Activated B cell treated with CpG ODN at 0.5 μM for 24 hours (primary cell): ENCODE measurements at regions of chr7 and their contacts with region 1.

Region 1: GRCh38 chr7:23531794-23532489 is at the start of gene TRA2A:
- DNase-seq: peak; percentile 97
- ATAC-seq: peak; percentile 89
- H3K4me3 Mint-ChIP-seq: peak within 1 kb of the TSS; percentile 99
- H3K27ac Mint-ChIP-seq: peak within 1 kb of the TSS; percentile 100
- H3K4me1 Mint-ChIP-seq: peaks cover 49% of the 10 kb centered on the region
- H3K27me3 Mint-ChIP-seq: no peaks in the 10 kb centered on the region
- CTCF ChIP-seq: no peak
- total RNA-seq, gene TRA2A: 123 and 144 TPM in 2 replicates

Region 2: DNA sequence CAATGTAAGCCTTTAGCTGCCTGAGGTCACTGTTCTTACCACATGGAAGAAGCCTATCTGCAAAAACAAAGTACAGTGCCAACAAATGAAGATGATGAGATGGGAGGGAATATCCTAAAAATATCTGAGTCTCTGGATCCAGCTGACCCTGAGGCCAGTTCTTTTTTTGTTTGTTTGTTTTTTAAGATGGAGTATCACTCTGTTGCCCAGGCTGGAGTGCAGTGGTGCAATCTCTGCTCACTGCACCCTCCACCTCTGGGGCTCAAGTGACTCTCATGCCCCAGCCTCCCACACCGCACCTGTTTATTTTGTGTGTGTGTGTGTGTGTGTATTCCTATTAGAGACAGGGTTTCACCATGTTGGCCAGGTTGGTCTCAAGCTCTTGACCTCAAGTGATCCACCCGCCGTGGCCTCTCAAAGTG is 562.9 kb before region 1 on chr7:
- CTCF ChIA-PET with region 1: no interaction called
- POLR2A ChIA-PET with region 1: no interaction called
- intact Hi-C with region 1: no loop called
- DNase-seq: no peak
- ATAC-seq: no peak
- H3K4me3 Mint-ChIP-seq: no peak overlapping the region
- H3K27ac Mint-ChIP-seq: no peak overlapping the region
- H3K4me1 Mint-ChIP-seq: no peaks in the 10 kb centered on the region
- H3K27me3 Mint-ChIP-seq: no peaks in the 10 kb centered on the region
- CTCF ChIP-seq: no peak

Region 3: DNA sequence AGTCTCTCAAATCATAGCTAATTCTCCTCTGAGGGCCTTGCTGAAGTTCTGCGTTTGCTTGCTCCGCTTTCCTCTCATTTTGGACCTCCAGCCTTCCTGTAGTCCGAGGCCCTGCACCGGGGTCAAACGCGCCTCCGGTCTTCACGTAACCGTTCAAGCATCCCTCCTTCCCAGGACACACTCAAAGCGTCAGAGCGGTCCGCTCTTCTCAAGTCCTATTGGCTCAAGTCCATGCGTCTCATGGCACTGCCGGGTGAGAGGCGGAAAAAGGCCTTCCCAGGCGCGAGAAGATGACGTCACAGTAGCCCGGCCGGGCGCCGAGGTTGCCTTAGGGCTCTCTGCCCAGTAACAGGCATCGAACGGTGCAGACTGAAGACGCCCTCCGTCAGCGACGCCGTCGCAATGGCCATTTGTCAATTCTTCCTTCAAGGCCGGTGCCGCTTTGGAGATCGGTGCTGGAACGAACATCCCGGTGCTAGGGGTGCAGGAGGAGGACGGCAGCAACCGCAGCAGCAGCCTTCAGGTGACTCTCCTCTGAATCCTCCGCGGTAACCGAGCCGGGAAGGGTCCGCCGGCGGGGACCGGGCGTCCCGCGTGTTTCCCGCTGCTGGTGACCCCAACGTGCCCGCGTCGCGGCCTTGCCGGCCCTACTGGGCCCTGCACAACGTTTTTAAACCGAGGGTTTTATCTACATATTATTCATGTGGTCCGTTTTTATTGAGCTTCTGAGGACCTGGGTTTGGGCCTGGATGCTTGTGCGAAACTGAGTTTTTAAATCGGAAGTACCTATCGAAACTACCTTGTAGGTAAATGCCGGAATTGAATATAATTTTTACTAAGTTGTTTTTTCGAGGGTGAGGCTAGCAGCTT is 350.0 kb before region 1 on chr7 and contains the start of gene NUP42:
- CTCF ChIA-PET with region 1: no interaction called
- POLR2A ChIA-PET with region 1: interaction called, 3 read pairs
- intact Hi-C with region 1: loop called (anchors 1 kb)
- DNase-seq: peak; percentile 90
- ATAC-seq: peak; percentile 90
- H3K4me3 Mint-ChIP-seq: peak within 1 kb of the TSS; percentile 94
- H3K27ac Mint-ChIP-seq: peak within 1 kb of the TSS; percentile 100
- H3K4me1 Mint-ChIP-seq: peaks cover 28% of the 10 kb centered on the region
- H3K27me3 Mint-ChIP-seq: no peaks in the 10 kb centered on the region
- CTCF ChIP-seq: no peak
- total RNA-seq, gene NUP42: 39.2 and 50.6 TPM in 2 replicates

Region 4: GRCh38 chr7:23373151-23374004 is 158.6 kb before region 1 on chr7:
- CTCF ChIA-PET with region 1: no interaction called
- POLR2A ChIA-PET with region 1: no interaction called
- intact Hi-C with region 1: loop called (anchors 2 kb)
- DNase-seq: peak; percentile 28
- ATAC-seq: peak; percentile 69
- H3K4me3 Mint-ChIP-seq: peak overlapping the region; percentile 68
- H3K27ac Mint-ChIP-seq: peak overlapping the region; percentile 94
- H3K4me1 Mint-ChIP-seq: peaks cover 70% of the 10 kb centered on the region
- H3K27me3 Mint-ChIP-seq: no peaks in the 10 kb centered on the region
- CTCF ChIP-seq: no peak

Region 5: DNA sequence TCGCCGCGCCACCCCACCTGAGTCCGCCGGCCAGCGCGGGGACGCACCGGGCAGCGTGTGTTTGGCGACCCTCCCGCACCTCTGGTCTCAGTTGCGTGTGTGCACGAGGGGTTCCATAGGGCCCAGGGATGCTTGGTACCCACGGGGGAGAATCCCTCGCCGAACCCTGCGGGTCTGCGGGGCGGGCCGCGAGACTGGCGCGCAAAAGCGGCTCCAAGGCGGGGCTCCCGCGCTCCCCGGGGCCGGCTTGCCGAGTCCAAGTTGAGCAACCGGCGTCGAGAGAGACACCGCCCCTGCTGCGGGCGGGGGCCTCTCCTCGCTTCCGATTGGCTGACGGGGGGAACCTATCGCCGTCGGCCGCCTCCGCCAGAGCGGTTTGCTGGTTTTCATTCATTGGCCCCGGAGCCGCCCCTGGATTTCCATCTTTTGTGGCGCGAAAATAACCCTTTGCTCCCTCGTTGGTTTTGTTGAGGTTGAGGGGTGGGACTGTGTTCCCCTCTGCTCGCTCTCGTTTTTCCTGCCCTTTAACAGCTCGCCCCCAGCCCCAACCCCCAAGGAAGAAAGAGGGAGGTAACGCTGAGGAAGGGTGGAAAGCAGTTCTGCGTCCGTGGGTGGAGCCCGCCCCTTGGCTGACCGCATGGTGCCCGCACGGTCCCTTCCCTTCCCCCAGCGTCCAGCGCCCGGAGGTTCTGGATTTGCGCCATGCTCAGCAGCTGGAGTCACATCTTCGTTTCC is 57.7 kb before region 1 on chr7:
- CTCF ChIA-PET with region 1: interaction called, 5 read pairs
- POLR2A ChIA-PET with region 1: interaction called, 4 read pairs
- intact Hi-C with region 1: loop called (anchors 2 kb)
- DNase-seq: peak; percentile 62
- ATAC-seq: peak; percentile 67
- H3K4me3 Mint-ChIP-seq: peak overlapping the region; percentile 77
- H3K27ac Mint-ChIP-seq: peak overlapping the region; percentile 41
- H3K4me1 Mint-ChIP-seq: peaks cover 30% of the 10 kb centered on the region
- H3K27me3 Mint-ChIP-seq: peaks cover 49% of the 10 kb centered on the region
- CTCF ChIP-seq: no peak

Region 6: GRCh38 chr7:23546897-23547572 is 15.1 kb after region 1 on chr7:
- CTCF ChIA-PET with region 1: interaction called, 6 read pairs
- POLR2A ChIA-PET with region 1: interaction called, 5 read pairs
- intact Hi-C with region 1: loop called (anchors 1 kb)
- DNase-seq: peak; percentile 40
- ATAC-seq: peak; percentile 91
- H3K4me3 Mint-ChIP-seq: no peak overlapping the region
- H3K27ac Mint-ChIP-seq: no peak overlapping the region
- H3K4me1 Mint-ChIP-seq: peaks cover 18% of the 10 kb centered on the region
- H3K27me3 Mint-ChIP-seq: no peaks in the 10 kb centered on the region
- CTCF ChIP-seq: no peak